Psoas muscle (tissue), 8 donors: ENCODE measurements at regions of chr1 and their contacts with region 1.

Region 1: DNA sequence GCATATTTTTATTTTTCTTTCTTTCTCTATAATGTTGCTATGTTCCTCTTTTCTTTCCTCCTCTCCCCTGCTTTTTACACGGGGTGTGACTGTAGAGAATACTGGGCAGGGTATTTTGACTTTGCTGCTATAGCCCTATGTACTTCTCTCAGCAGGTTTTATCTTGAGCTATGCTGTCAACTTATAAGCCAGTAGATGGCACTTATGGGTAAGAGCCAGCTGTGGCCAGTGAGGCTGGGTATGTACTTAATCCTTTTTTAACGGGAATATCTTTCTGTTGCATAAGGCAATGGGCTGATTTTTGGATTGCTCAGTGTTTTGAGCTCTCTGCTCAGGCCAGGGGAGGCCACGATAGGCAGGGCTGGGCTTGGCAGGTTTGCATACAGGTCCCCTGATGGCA is 99.0 kb downstream of the KCNK2 start:
- DNase-seq: no peak
- ATAC-seq: no peak
- H3K4me3 ChIP-seq: no peak overlapping the region
- H3K27ac ChIP-seq: no peak overlapping the region
- H3K4me1 ChIP-seq: no peaks in the 10 kb centered on the region
- H3K27me3 ChIP-seq: no peaks in the 10 kb centered on the region
- CTCF ChIP-seq: no peak

Region 2: DNA sequence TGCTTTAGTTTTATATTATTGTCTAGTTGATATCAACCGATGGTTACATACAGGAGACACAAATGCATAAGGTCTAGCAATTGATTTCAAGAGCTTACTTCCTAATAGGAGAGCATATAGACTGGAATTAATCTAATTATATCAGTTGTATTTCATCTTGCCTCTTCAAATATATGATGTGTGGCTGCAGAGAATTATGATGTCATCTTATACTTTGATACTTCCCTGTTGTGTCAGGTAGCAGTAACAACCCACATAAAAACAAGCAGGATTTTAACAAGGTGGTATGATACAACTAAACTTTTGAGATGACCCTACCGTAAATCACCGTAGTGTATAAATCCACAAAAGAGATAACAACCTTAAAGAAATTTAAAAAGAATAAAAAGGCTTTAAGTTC is 305.3 kb before region 1 on chr1:
- intact Hi-C with region 1: no loop called
- DNase-seq: no peak
- ATAC-seq: no peak
- H3K4me3 ChIP-seq: no peak overlapping the region
- H3K27ac ChIP-seq: no peak overlapping the region
- H3K4me1 ChIP-seq: no peaks in the 10 kb centered on the region
- H3K27me3 ChIP-seq: no peaks in the 10 kb centered on the region
- CTCF ChIP-seq: no peak

Region 3: DNA sequence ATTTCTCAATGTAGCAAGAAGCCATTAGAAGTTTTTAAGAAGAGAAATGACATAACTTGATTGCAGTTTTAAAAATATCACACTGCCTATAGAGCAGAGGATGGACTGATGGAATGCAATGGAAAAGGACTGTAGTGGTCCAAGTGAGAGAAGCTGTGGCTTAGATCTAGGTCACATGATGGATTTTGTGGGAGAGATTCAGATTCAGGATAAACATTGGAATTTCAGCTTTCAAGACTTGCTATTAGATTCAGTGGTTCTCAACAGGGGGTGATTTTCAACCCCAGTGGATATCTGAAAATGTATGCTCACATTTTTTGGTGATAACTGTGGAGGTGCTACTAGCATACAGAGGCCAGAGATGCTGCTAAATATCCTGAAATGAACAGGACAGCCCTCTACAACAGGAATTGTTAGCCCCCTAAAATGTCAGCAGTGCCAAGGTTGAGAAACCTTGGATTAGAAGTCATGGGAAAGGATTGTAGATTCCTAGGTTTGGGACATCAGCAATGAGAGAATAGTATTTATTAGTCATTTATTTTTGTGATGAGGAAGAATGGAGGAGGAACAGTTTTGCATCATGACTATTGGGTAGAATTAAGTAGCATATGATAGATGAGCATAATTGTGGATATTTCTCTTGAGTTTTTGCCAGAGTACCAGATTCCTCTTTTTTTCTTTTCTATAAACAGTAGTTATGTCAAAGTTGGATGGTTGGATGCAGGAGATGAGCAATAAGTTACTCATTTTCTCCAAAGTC is 129.1 kb before region 1 on chr1:
- intact Hi-C with region 1: no loop called
- DNase-seq: no peak
- ATAC-seq: no peak
- H3K4me3 ChIP-seq: no peak overlapping the region
- H3K27ac ChIP-seq: no peak overlapping the region
- H3K4me1 ChIP-seq: no peaks in the 10 kb centered on the region
- H3K27me3 ChIP-seq: no peaks in the 10 kb centered on the region
- CTCF ChIP-seq: no peak

Region 4: GRCh38 chr1:215321802-215322201 is 140.3 kb after region 1 on chr1:
- intact Hi-C with region 1: no loop called
- DNase-seq: no peak
- ATAC-seq: no peak
- H3K4me3 ChIP-seq: no peak overlapping the region
- H3K27ac ChIP-seq: no peak overlapping the region
- H3K4me1 ChIP-seq: no peaks in the 10 kb centered on the region
- H3K27me3 ChIP-seq: no peaks in the 10 kb centered on the region
- CTCF ChIP-seq: no peak

Region 5: GRCh38 chr1:215405211-215405610 is 223.7 kb after region 1 on chr1:
- intact Hi-C with region 1: no loop called
- DNase-seq: no peak
- ATAC-seq: no peak
- H3K4me3 ChIP-seq: no peak overlapping the region
- H3K27ac ChIP-seq: no peak overlapping the region
- H3K4me1 ChIP-seq: no peaks in the 10 kb centered on the region
- H3K27me3 ChIP-seq: peaks cover 0 to 2% (median 0%) of the 10 kb centered on the region in 3 donors
- CTCF ChIP-seq: no peak

Region 6: GRCh38 chr1:215507119-215507518 is 325.6 kb after region 1 on chr1:
- intact Hi-C with region 1: loop called in 1 of 2 experiments (anchors 10 kb)
- DNase-seq: no peak
- ATAC-seq: no peak
- H3K4me3 ChIP-seq: no peak overlapping the region
- H3K27ac ChIP-seq: no peak overlapping the region
- H3K4me1 ChIP-seq: no peaks in the 10 kb centered on the region
- H3K27me3 ChIP-seq: no peaks in the 10 kb centered on the region
- CTCF ChIP-seq: no peak